Endothelial cell of umbilical vein (primary cell): ENCODE measurements at regions of chr10 and their contacts with region 1.

Region 1: GRCh38 chr10:70880077-70880534 is 8.3 kb downstream of the PCBD1 start:
- DNase-seq: peak; percentile 82
- H3K4me3 ChIP-seq: no peak overlapping the region
- H3K27ac ChIP-seq: no peak overlapping the region
- H3K4me1 ChIP-seq: no peaks in the 10 kb centered on the region
- H3K27me3 ChIP-seq: no peaks in the 10 kb centered on the region
- CTCF ChIP-seq: peak; percentile 80 to 85
- POLR2A ChIP-seq: no peak

Region 2: GRCh38 chr10:70549962-70550458 is 330.1 kb before region 1 on chr10:
- CTCF ChIA-PET with region 1: interaction called, 3 read pairs
- POLR2A ChIA-PET with region 1: no interaction called
- dilution Hi-C with region 1: no loop called
- intact Hi-C with region 1: loop called (anchors 1 kb)
- DNase-seq: peak; percentile 59
- H3K4me3 ChIP-seq: no peak overlapping the region
- H3K27ac ChIP-seq: no peak overlapping the region
- H3K4me1 ChIP-seq: no peaks in the 10 kb centered on the region
- H3K27me3 ChIP-seq: no peaks in the 10 kb centered on the region
- CTCF ChIP-seq: peak; percentile 76 to 84
- POLR2A ChIP-seq: no peak

Region 3: GRCh38 chr10:70815504-70816219 is 64.4 kb before region 1 on chr10 and contains the start of gene SGPL1:
- CTCF ChIA-PET with region 1: interaction called, 21 read pairs
- POLR2A ChIA-PET with region 1: no interaction called
- dilution Hi-C with region 1: no loop called
- intact Hi-C with region 1: loop called (anchors 1 kb)
- DNase-seq: peak; percentile 79
- H3K4me3 ChIP-seq: peak within 1 kb of the TSS; percentile 58 to 75 (median 59)
- H3K27ac ChIP-seq: peak within 1 kb of the TSS; percentile 23
- H3K4me1 ChIP-seq: peaks cover 3% of the 10 kb centered on the region
- H3K27me3 ChIP-seq: peaks cover 0 to 3% of the 10 kb centered on the region in 2 experiments
- CTCF ChIP-seq: peak; percentile 91 to 99
- POLR2A ChIP-seq: no peak
- total RNA-seq, gene SGPL1: 25.2 and 28.0 TPM in 2 replicates